ENCODE measurements at regions of chr19 and their contacts with region 1.

Region 1: GRCh38 chr19:35114353-35115176 is 1.1 kb upstream of the FXYD3 start:
- DNase-seq: peak; percentile 92
- H3K4me3 ChIP-seq: peak overlapping the region in 1 of 2 experiments; percentile 44; a peak in 1 of 4 replicates
- H3K27ac ChIP-seq: no peak overlapping the region
- H3K4me1 ChIP-seq: peaks cover 0 to 8% of the 10 kb centered on the region in 2 experiments; a peak in 1 of 4 replicates
- H3K27me3 ChIP-seq: no peaks in the 10 kb centered on the region; the same call in 1 of the 2 replicates
- CTCF ChIP-seq: peak; percentile 96
- EP300 ChIP-seq: no peak
- RAD21 ChIP-seq: peak; percentile 70

Region 2: DNA sequence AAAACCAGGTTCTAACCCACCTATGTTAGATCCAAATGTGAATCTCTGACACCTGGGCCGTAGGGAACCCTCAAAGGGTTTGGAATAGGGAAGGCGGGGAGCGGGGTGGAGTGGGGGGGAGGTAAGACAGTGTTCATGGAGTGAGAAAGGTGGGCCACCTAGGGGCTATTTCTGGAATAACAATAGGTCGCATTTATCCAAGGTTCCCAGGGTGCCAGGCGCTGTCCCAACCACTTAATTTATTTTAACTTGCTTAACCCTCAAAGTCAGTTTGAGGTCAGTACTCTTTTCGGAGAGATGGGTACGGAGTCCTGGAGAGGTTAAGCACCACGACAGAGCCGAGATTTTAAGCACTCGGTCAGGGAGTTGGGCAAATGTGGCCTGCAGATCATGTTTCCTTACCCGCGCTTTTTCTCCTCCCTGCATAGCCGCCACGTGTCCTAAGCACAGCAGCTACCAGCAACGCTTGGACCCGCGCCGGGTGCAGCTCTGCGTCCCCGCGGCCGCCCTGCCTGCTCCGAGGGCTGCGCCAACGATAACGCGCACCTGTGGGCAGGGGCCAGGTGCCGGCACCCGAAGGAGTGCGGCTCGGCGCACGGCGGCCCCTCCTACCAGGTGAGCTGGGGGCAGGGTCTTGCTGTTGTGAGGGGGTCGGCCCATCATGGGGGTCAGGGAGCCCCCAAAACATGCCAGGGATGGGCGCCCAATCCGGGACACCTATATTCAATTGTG is 23.9 kb before region 1 on chr19:
- CTCF ChIA-PET with region 1: interaction called, 20 read pairs
- POLR2A ChIA-PET with region 1: no interaction called
- DNase-seq: peak; percentile 90
- H3K4me3 ChIP-seq: no peak overlapping the region
- H3K27ac ChIP-seq: no peak overlapping the region
- H3K4me1 ChIP-seq: peaks cover 10 to 15% of the 10 kb centered on the region in 2 experiments; a peak in 2 of 4 replicates
- H3K27me3 ChIP-seq: no peaks in the 10 kb centered on the region
- CTCF ChIP-seq: peak; percentile 68
- EP300 ChIP-seq: no peak
- RAD21 ChIP-seq: peak; percentile 71

Region 3: DNA sequence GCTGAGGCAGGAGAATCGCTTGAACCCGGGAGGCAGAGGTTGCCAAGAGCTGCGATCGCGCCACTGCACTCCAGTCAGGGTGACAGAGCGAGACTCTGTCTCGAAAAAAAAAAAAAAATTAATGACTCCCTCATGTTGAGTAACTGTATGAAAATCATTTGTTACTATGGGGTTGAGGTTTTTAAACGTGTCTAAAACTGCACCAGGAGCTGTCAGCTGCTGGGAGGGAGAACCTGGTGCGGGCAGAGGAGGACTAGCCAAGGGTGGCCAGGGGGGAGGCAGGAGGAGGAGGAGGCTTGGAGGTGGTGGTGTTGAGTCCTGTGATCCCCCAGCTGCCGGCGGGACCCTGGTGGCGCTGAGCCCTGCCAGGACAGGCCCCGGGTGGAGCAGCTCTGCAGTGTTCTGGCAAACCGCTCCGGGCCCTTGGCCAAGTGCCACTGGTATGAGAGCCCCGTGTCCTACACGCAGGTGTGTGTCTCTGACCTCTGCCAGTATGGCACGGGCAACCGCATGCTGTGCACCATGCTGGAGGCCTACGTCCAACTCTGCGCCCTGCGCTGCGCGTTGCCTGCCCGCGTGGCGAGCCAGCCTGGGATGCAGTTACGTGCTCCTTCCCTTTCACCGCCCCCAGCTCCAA is 16.0 kb before region 1 on chr19:
- CTCF ChIA-PET with region 1: interaction called, 27 read pairs
- POLR2A ChIA-PET with region 1: no interaction called
- DNase-seq: no peak
- H3K4me3 ChIP-seq: no peak overlapping the region
- H3K27ac ChIP-seq: no peak overlapping the region
- H3K4me1 ChIP-seq: peaks cover 0 to 8% of the 10 kb centered on the region in 2 experiments; a peak in 1 of 4 replicates
- H3K27me3 ChIP-seq: no peaks in the 10 kb centered on the region
- CTCF ChIP-seq: no peak
- EP300 ChIP-seq: no peak
- RAD21 ChIP-seq: no peak

Measured in SK-N-SH (cell line).